ENCODE measurements at regions of chr2 and their contacts with region 1.

Region 1: GRCh38 chr2:8090748-8091700 is 590.8 kb upstream of the ID2 start:
- DNase-seq: no peak
- ATAC-seq: no peak
- H3K4me3 ChIP-seq: no peak overlapping the region
- H3K27ac ChIP-seq: no peak overlapping the region
- H3K4me1 ChIP-seq: no peaks in the 10 kb centered on the region
- H3K27me3 ChIP-seq: no peaks in the 10 kb centered on the region
- CTCF ChIP-seq: no peak

Region 2: DNA sequence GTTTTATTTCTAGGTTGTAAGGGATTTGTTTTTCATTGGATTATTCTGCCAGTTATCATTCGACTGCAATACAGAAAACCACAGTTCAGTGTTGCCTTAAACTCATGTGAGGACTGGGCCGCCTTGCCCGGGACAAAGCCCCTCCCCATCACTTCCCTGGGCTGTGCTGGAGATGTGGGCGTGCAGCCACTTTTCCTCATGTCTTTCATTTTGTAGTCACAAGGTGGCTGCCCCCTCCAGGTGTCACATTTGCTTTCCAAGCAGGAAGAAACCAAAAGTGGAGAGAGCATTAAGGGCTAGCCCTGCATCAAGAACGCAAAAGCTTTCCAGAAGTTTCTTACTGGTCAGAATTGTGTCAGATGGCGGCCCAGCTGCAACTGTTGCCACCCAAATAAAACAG is 98.3 kb after region 1 on chr2:
- CTCF ChIA-PET with region 1: no interaction called
- POLR2A ChIA-PET with region 1: no interaction called
- in situ Hi-C with region 1: no loop called
- intact Hi-C with region 1: no loop called
- DNase-seq: no peak
- ATAC-seq: no peak
- H3K4me3 ChIP-seq: no peak overlapping the region
- H3K27ac ChIP-seq: no peak overlapping the region
- H3K4me1 ChIP-seq: no peaks in the 10 kb centered on the region
- H3K27me3 ChIP-seq: no peaks in the 10 kb centered on the region; the same call in 1 of the 2 replicates
- CTCF ChIP-seq: no peak

Region 3: GRCh38 chr2:9234680-9235387 is 1143.8 kb after region 1 on chr2:
- CTCF ChIA-PET with region 1: interaction called, 10 read pairs
- POLR2A ChIA-PET with region 1: no interaction called
- in situ Hi-C with region 1: no loop called
- intact Hi-C with region 1: no loop called
- DNase-seq: no peak
- ATAC-seq: peak; percentile 64
- H3K4me3 ChIP-seq: peak overlapping the region; percentile 24 to 45
- H3K27ac ChIP-seq: peak overlapping the region; percentile 100
- H3K4me1 ChIP-seq: peaks cover 99% of the 10 kb centered on the region
- H3K27me3 ChIP-seq: no peaks in the 10 kb centered on the region
- CTCF ChIP-seq: no peak

Measured in Panc1 (cell line).